Activated CD8-positive, alpha-beta T cell treated with anti-CD3 and anti-CD28 coated beads, Interleukin-2, amount 10 ng/mL, durations not matched to agents 7 days and 5 days (primary cell): ENCODE measurements at regions of chr17 and their contacts with region 1.

Region 1: DNA sequence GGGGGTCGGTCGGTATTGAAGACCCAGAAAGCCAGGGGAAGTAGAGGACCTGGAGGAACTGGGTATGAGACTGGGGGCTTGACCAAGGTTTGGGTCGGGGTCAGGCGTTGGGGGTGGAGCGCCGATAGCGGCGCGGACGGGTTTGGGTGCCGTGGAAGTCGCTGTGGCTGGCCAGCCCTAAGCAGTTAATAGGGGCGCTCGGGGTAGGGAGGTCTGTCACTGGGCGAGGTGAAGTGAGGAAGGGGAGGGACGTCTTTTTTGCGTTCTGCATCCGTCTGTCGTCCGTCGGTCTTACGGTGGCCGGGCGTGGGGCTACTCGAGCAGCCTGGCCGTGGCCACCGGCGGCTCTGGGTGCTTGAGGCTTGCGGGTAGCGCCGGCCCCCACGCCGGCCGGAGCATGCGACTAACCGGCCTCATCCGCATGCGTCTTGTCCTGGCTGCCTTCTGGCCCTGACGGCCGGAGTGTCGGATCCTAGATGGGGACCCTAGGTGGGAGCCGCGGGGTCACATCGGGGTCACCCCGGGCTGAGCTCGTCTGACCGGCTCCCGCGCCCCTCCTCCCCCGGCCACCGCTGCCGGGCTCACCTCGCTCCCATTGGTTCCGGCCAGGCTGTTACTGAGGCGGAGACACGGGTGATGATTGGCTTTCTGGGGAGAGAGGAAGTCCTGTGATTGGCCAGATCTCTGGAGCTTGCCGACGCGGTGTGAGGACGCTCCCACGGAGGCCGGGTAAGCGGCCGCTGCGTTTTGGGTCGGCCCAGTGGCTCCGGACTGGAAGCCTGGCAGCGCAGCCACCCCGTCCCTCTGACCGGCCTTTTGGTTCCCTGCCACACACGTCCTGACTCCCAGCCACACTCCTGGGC is 10.3 kb upstream of the TMEM88 start:
- DNase-seq: peak; percentile 91
- ATAC-seq: peak; percentile 64
- H3K4me3 Mint-ChIP-seq: peak overlapping the region; percentile 97
- H3K27ac Mint-ChIP-seq: peak overlapping the region; percentile 99
- H3K4me1 Mint-ChIP-seq: peaks cover 38% of the 10 kb centered on the region
- H3K27me3 Mint-ChIP-seq: no peaks in the 10 kb centered on the region

Region 2: GRCh38 chr17:7825206-7825990 is 19.1 kb before region 1 on chr17:
- CTCF ChIA-PET with region 1: interaction called, 14 read pairs
- POLR2A ChIA-PET with region 1: no interaction called
- DNase-seq: no peak
- ATAC-seq: no peak
- H3K4me3 Mint-ChIP-seq: no peak overlapping the region
- H3K27ac Mint-ChIP-seq: no peak overlapping the region
- H3K4me1 Mint-ChIP-seq: no peaks in the 10 kb centered on the region
- H3K27me3 Mint-ChIP-seq: peaks cover 18% of the 10 kb centered on the region